ENCODE measurements at regions of chr5 and their contacts with region 1.

Region 1: GRCh38 chr5:66891183-66891925 is 295.2 kb downstream of the MAST4 start:
- DNase-seq: no peak
- ATAC-seq: peak; percentile 68

Region 2: GRCh38 chr5:66724349-66725139 is 166.8 kb before region 1 on chr5:
- intact Hi-C with region 1: no loop called
- DNase-seq: no peak
- ATAC-seq: no peak

Region 3: GRCh38 chr5:66828548-66829357 is 62.6 kb before region 1 on chr5:
- intact Hi-C with region 1: loop called (anchors 5 kb)
- DNase-seq: peak; percentile 79
- ATAC-seq: peak; percentile 94

Region 4: GRCh38 chr5:66849803-66850202 is 41.6 kb before region 1 on chr5:
- intact Hi-C with region 1: no loop called
- DNase-seq: no peak
- ATAC-seq: no peak

Measured in Right ventricle myocardium inferior (tissue), 1 donor.